Gastrocnemius medialis (tissue), 4 donors: ENCODE measurements at regions of chr3 and their contacts with region 1.

Region 1: GRCh38 chr3:196115678-196116083 is 33.8 kb upstream of the TFRC start:
- DNase-seq: no peak
- ATAC-seq: no peak
- H3K4me3 ChIP-seq: no peak overlapping the region
- H3K27ac ChIP-seq: no peak overlapping the region
- H3K4me1 ChIP-seq: peaks cover 7 to 18% of the 10 kb centered on the region in 2 donors
- H3K27me3 ChIP-seq: no peaks in the 10 kb centered on the region
- CTCF ChIP-seq: no peak
- POLR2A ChIP-seq: no peak

Region 2: DNA sequence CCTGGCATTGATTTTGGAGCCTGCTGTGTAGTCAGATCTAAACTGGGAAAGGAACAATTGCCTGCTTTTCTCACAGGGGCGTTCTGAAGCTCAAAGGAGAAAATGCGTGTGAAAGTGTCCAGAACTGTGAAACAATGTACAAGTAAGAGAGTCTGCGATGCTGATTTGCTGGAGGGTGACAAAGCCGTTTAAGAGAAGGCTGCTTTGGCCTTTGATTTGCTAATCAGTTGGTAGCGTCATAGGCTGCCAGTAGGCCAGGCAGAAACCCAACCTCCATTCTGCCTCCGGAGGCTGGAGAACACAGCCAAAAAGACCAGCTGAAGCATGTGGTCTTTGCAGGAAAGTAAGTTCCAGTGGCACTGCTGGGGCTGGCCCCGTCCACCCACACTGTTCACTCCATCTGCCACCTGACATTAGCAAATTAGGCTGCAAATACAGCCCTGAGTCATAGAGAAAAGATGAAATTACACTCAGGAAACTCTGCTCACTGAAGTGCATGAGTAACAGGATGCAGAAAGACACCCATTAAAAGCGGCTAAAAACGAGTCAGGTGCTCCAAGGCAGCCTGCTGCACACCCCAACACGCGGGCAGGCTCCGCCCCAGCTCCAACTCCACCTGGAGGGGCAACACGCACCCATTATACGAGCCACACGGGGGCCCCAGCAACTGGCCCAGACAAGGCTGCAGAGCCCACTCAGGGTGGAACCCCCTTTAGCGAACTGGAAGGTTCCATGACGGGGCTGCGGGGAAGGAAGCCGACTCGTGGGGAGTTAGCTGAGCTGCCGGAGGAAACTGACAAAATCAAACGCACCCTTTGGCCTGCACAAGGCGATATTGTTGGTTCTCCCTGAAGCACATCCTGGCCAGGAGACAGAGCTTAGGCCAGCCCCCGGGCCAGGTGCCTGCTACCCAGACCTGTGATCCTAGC is 64.0 kb after region 1 on chr3:
- in situ Hi-C with region 1: no loop called
- intact Hi-C with region 1: loop called (anchors 5 kb)
- DNase-seq: peak; percentile 60 to 77
- ATAC-seq: peak; percentile 92
- H3K4me3 ChIP-seq: peak overlapping the region in 3 of 4 donors; percentile 11 to 44 (median 23)
- H3K27ac ChIP-seq: peak overlapping the region; percentile 73 to 88 (median 78)
- H3K4me1 ChIP-seq: peaks cover 19 to 28% of the 10 kb centered on the region in 2 donors
- H3K27me3 ChIP-seq: no peaks in the 10 kb centered on the region
- CTCF ChIP-seq: no peak
- POLR2A ChIP-seq: peak in 1 of 2 donors; percentile 25